ENCODE measurements at regions of chr1 and their contacts with region 1.

Region 1: DNA sequence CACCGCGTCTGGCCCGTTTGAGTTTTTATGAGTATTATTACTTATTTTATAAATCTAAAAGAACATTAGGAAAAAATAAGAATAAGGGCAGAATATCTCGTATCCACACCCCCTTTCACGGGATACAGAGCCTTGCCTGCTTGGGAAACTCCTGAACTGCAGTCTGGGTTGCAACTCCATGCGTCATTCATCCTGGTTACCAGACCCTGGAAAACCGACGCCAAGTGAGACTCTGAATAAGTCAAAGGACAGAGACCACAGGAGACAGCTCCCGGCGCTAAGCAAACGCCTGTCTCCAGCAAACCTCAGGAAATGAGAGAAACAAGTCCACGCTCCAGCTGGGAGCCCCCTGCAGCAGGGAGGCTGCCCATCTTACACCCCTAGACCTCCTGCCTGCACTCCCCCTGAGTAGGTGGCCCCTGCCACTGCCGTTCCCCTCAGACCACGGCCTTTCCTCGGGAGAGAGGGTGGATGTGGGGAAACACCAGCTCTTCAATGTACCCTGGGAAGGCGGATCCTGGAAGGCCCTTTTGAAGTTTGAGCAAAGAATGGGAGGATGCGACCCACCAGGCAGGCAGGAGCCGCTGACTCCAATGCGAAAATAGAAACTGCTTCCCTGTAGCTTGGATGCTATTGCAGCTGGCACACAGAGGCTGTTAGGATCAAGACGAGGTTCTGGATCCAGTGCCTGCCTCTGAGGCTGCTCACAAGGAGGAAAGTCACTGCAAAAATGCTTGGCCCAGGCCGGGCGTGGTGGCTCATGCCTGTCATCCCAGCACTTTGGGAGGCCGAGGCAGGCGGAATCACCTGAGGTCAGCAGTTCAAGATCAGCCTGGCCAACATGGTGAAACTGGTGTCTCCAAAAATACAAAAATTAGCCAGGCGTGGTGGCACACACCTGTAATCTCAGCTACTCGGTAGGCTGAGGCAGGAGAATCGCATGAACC is 37.7 kb upstream of the GPR157 start:
- DNase-seq: no peak
- H3K4me3 ChIP-seq: no peak overlapping the region
- H3K27ac ChIP-seq: no peak overlapping the region
- H3K4me1 ChIP-seq: no peaks in the 10 kb centered on the region
- H3K27me3 ChIP-seq: no peaks in the 10 kb centered on the region
- CTCF ChIP-seq: no peak

Region 2: DNA sequence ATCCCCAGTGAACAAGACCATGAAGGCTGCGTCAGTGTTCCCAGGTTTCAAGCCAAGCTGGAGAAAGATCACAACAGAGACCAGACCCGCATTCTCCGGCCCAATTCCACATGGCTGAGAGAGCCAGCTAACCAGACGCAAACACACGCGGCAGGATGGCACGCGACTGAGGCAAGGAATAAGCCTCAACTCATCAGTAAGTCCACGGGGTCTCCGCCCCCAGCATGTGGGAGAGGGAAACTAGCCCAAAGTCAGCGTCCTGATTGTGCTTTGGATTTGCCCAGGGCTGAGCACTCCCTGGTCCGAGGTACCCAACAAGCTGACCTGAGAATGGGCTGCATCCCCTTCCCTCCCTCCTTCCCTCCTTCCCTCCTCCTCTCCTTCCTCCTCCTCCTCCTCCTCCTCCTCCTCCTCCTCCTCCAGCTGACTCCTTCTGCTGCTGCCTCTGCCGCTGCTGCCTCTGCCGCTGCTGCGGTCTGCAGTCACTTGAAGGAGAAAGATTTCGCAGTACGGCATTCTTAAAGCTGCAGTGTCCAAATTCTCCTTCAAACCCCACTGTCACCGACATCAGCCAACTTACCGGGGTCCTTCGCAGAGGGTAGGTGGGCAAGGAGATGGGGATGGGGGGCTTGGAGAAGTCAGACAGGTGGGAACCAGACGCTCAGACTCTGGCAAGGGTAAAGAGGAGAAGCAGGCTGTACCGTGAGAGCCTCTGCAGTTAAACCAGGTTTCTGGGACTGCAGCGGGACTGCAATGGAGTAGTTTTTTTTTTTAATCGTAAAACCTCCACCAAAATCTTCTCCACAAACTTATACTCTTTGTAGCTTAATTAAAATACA is 35.1 kb after region 1 on chr1:
- CTCF ChIA-PET with region 1: no interaction called
- POLR2A ChIA-PET with region 1: interaction called, 11 read pairs
- intact Hi-C with region 1: no loop called
- DNase-seq: no peak
- H3K4me3 ChIP-seq: no peak overlapping the region
- H3K27ac ChIP-seq: no peak overlapping the region
- H3K4me1 ChIP-seq: peaks cover 12% of the 10 kb centered on the region
- H3K27me3 ChIP-seq: peaks cover 83% of the 10 kb centered on the region
- CTCF ChIP-seq: no peak

Measured in A673 (cell line).